AG04450 (cell line): ENCODE measurements at regions of chr11 and their contacts with region 1.

Region 1: DNA sequence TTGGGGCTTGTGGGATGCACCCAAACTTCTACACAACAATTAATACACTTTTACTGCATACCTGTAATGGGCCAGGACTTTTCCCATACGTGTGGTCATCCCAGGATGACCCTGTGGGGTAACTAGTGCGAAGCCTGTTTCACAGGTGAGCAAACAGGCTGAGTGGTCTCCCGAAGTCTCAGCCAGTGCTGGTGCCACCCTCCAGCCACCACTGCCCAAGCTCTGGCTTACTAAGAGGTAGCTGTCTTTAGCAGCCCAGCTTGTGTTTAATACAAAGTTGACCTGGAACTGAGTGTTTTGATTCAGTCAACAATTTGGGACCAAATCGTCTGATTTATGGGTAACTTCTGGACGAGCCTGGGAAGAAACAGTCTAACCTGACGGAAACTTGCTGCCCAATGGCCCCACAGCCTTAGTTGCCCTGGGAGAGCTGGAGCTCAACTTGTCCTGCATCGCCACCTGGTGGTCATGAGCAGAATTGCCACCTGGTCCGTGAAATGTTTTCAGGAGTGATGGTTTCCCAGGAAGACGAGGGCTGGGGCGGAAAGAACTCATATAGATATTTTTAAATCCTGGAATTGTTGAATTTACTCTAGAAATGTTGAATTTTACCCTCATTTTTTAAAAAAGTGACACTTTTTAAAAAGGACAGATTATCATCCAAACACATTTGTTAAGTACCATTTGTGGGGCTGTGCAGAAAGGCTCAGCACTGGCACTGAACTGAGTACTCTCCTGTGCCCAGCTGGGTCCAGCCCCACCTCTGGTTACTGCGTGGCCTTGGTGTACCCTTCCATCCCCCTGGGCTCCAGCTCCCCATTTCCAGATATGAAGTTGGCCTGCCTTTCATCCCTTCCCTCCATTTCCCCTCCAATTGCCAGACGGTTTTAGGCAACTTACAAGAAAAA is 95.5 kb upstream of the PARVA start:
- DNase-seq: peak; percentile 73
- H3K4me3 ChIP-seq: no peak overlapping the region
- H3K27ac ChIP-seq: no peak overlapping the region
- H3K27me3 ChIP-seq: no peaks in the 10 kb centered on the region
- CTCF ChIP-seq: peak; percentile 93

Region 2: DNA sequence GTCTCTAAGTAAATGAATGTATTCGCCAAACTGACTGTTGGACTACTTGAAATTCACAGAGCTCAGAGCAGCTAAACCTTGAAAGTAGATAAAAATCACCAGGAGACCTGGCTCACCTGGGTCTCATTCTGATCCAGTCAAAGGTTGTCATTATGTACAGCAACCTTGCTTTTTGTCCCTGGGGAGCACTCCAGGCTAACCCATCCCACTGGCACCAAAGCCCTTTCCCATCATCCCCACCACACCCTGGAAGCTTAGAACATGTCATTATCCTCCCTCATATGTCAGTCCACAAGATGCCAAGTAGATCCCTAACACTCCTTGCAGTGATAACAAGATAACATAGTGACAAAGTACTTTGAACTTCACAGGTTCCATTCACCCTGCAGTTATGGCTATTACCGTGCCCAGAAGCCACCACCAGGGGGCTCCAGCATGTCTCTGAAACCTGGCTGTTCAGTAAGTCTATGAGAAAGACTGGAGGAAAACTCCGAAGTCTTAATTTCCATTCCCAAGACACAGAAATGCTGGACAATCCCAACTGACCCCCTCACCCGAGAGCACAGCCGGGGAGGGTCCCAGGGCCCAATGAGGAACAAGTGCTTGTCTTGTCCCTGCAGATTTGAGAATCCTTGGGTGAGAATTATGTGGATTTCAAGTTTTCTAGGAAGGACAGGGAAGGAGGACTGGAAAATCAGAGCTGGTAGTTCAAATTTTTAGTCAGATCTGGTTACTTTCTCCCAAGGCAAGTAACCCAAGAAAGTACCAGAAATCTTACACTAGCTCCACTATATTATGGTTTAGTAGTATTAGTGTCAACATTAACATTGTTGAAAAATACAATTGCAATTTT is 483.0 kb before region 1 on chr11:
- CTCF ChIA-PET with region 1: interaction called, 22 read pairs
- POLR2A ChIA-PET with region 1: no interaction called
- DNase-seq: peak; percentile 38
- H3K4me3 ChIP-seq: no peak overlapping the region
- H3K27ac ChIP-seq: no peak overlapping the region
- H3K27me3 ChIP-seq: peaks cover 3% of the 10 kb centered on the region
- CTCF ChIP-seq: peak; percentile 98

Region 3: DNA sequence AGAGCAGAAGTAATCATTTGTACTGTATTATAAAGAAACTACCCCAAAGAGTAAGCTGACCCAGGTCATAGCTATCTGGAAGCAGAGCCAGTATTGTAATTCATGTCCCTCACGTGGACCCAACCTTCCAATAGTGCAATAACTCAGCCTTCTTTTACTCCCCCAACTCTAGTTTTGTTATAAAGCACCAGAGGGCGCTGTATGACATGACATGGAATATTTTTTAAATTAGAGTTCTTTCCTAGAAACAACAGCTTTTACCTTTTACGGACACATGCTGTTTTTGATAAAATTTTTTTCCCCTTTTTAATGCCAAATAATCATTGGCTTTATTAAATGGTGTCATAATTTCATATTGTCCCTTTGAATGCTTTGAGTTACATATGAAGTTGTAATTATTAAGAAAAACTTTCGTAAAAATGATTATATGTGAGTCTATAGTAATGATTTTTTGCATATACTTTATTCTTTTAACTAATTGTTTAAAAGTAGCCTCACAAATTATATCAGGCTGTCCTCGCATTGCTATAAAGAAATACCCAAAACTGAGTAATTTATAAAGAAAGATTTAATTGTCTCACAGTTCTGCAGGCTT is 350.3 kb before region 1 on chr11:
- CTCF ChIA-PET with region 1: interaction called, 16 read pairs
- POLR2A ChIA-PET with region 1: no interaction called
- DNase-seq: peak; percentile 18
- H3K4me3 ChIP-seq: no peak overlapping the region
- H3K27ac ChIP-seq: no peak overlapping the region
- H3K27me3 ChIP-seq: no peaks in the 10 kb centered on the region
- CTCF ChIP-seq: peak; percentile 72

Region 4: DNA sequence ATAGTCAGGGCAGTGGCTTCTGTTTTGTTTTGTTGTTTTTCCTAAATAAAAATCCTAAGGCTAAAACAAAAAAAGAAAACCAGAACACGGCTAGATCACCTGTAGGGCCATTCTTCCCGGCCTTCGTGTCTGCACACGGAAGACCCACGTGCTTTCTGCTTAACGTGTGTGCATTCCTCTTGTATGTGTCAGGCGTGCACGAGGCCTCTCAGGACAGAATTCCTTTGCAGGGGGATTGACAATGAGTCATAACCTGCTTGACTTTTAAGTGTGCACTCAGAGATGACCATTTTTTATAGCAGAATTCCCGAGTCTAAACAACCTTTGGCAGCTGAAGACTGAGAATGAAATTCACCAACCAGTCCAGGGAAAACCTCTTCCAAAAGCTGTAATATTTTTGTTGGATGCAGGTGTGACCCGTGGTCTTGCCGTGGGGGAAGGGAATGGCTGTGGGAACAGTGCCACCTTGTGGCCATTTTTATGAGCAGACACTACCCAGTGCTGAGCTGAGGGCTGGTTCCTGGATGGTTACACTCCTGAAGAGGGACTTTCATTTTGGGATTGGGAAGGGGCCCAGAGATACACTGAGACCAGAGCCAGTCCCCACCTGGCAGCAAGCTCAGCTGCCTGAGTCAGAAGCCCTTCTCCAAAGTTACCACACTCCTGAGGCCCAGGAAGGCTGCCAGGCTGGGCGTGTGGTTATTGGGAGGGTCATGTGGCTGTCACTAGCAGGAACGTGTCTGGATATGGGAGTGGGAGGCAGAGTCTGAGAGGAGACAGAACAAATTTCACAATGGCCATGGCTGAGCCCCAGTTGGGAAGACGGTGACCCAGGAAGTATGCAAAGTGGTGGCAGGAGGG is 237.6 kb before region 1 on chr11:
- CTCF ChIA-PET with region 1: interaction called, 205 read pairs
- POLR2A ChIA-PET with region 1: interaction called, 5 read pairs
- DNase-seq: peak; percentile 94
- H3K4me3 ChIP-seq: peak overlapping the region; percentile 49
- H3K27ac ChIP-seq: peak overlapping the region; percentile 96
- H3K27me3 ChIP-seq: no peaks in the 10 kb centered on the region
- CTCF ChIP-seq: peak; percentile 91

Region 5: DNA sequence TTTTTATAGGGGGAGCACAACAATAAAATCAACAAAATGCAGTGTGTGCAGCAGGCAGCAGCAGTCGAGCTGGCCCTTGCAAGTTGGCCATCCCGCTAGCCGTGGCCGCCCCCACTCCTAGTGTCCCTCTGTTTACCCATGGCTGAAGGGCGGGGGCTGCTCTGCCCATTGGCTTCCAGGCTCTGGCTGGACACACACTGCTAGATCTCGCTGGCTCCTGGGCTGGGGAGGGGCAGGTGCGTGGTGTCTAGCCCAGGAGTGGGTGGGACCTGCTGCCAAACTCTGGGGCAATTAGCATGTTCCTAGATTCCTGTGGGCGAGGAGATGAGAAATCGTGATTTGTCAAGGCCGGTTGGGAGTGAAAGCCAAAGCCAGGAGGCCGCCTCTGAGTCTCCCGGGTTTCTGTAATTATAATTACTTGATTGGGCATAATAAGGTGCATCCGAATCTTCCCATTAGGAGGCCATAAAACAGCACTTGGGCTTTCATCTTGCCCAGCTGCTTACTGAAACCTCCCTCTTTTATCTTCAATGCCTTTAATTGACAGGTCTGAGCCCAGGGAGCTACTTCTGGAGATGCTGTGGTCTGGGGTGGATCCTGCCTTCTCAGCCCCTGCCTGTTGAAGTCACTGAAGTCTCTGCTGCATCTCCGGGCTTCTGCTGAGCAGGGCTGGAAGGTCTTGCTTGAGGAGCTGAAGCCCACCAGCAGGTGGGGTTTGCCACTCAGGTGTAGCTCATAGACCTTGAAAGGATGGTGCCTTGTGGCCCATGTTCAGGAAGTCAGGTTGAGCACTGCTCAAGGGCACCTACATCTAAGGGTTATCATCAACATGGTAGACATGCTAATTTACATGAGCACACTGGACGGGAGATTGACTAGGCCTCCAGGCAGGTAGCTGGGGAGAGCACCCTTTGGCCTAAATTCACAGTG is 228.9 kb before region 1 on chr11:
- CTCF ChIA-PET with region 1: interaction called, 205 read pairs
- POLR2A ChIA-PET with region 1: interaction called, 5 read pairs
- DNase-seq: no peak
- H3K4me3 ChIP-seq: no peak overlapping the region
- H3K27ac ChIP-seq: no peak overlapping the region
- H3K27me3 ChIP-seq: no peaks in the 10 kb centered on the region
- CTCF ChIP-seq: peak; percentile 45

Region 6: DNA sequence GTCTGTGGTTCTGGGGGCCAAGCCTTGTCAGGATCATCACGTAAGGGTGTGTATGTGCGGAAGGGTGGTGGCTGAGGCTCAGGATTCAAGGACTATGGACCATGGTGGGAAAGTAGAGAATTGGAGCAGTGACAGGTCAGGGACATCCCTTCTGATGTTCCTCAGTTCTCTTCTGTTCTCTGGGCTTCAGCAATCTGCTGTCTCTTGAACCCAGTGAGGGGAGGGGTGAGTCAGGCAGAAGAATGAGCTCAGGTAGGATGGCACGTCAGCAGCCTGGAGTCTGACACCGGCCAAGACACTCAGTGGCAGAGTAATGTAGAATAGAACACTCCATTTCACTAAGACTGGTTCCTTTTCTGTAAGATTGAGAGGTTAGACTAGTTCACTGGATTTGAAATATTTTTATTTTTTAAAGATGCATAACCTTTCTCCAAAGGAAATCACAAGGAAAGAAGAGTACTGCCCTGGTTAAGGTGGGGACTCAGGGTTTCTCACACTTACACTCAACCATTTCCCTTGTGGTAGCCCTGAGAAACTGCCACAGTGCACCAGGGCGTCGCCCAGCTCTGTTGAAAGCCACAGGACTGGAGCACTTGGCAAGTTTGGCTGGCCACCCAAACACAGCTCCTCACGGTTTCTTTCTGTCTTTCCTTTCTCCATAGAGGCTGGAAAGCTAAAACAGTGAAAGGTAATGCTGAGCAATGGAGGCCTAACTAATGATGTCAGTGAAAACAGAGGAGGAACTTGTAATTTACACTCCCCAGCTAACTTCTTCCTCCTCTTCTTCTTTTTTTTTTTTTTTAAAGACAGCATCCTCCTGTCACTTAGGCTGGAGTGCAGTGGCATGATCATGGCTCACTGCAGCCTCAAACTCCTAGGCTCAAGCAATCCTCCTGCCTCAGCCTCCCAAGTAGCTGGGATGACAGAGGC is 194.5 kb before region 1 on chr11:
- CTCF ChIA-PET with region 1: interaction called, 15 read pairs
- POLR2A ChIA-PET with region 1: interaction called, 4 read pairs
- DNase-seq: no peak
- H3K4me3 ChIP-seq: peak overlapping the region; percentile 50
- H3K27ac ChIP-seq: peak overlapping the region; percentile 100
- H3K27me3 ChIP-seq: no peaks in the 10 kb centered on the region
- CTCF ChIP-seq: no peak; the same call in 1 of the 2 replicates

Region 7: GRCh38 chr11:12207384-12208150 is 74.3 kb before region 1 on chr11:
- CTCF ChIA-PET with region 1: no interaction called
- POLR2A ChIA-PET with region 1: no interaction called
- DNase-seq: peak; percentile 80
- H3K4me3 ChIP-seq: no peak overlapping the region
- H3K27ac ChIP-seq: peak overlapping the region; percentile 97
- H3K27me3 ChIP-seq: no peaks in the 10 kb centered on the region
- CTCF ChIP-seq: peak; percentile 23; the same call in 1 of the 2 replicates

Region 8: GRCh38 chr11:12235947-12236743 is 45.7 kb before region 1 on chr11:
- CTCF ChIA-PET with region 1: interaction called, 28 read pairs
- POLR2A ChIA-PET with region 1: interaction called, 3 read pairs
- DNase-seq: peak; percentile 43
- H3K4me3 ChIP-seq: no peak overlapping the region
- H3K27ac ChIP-seq: peak overlapping the region; percentile 65
- H3K27me3 ChIP-seq: no peaks in the 10 kb centered on the region
- CTCF ChIP-seq: peak; percentile 70